ENCODE measurements at regions of chr18 and their contacts with region 1.

Region 1: GRCh38 chr18:54946149-54946581 is 13.1 kb downstream of the CCDC68 start:
- DNase-seq: peak; percentile 17
- H3K4me3 Mint-ChIP-seq: peak overlapping the region; percentile 83
- H3K27ac Mint-ChIP-seq: peak overlapping the region; percentile 71
- H3K4me1 Mint-ChIP-seq: peaks cover 17% of the 10 kb centered on the region
- H3K27me3 Mint-ChIP-seq: no peaks in the 10 kb centered on the region

Region 2: GRCh38 chr18:54405290-54405689 is 540.9 kb before region 1 on chr18:
- CTCF ChIA-PET with region 1: no interaction called
- POLR2A ChIA-PET with region 1: no interaction called
- intact Hi-C with region 1: no loop called
- DNase-seq: no peak
- H3K4me3 Mint-ChIP-seq: no peak overlapping the region
- H3K27ac Mint-ChIP-seq: no peak overlapping the region
- H3K4me1 Mint-ChIP-seq: no peaks in the 10 kb centered on the region
- H3K27me3 Mint-ChIP-seq: peaks cover 9% of the 10 kb centered on the region

Region 3: DNA sequence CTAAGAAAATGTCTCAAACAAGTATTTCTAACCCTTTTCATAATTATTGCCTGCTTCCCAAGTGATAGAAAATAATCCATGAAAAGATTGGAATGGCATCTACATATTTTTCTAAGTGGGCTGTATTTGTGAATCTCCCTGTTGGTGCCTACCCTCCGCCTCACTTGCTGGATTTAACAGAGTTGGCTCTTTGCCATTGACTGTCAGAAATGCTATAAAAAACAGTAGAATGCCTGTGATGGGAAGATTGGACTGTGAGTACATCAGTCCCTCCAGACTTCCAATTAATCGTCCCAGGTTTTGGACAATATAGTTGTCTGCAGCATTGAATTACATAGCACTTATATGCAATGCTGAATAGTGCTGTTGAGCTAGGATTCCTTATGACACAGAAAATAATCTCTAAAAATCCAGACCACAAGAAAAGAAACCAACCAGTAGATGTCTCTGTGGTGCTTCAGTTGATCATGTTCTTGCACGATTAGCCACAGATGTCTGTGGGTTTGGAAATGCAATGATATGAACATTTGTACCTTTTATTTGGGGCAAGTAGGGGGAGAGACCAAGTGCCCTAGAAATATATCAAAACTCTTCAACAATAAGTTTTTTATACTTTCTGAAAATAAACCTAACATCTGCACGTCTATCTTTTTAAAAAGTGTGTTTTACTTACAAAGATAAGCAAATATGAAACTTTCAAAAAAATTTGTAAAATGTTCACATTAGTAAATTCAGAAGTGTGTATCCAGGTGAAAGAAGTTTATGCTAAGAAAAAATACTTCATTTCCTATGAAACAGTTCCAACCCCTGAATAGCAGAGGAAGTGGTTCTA is 266.6 kb before region 1 on chr18:
- CTCF ChIA-PET with region 1: interaction called, 7 read pairs
- POLR2A ChIA-PET with region 1: no interaction called
- intact Hi-C with region 1: loop called (anchors 1 kb)
- DNase-seq: no peak
- H3K4me3 Mint-ChIP-seq: no peak overlapping the region
- H3K27ac Mint-ChIP-seq: no peak overlapping the region
- H3K4me1 Mint-ChIP-seq: peaks cover 3% of the 10 kb centered on the region
- H3K27me3 Mint-ChIP-seq: peaks cover 1% of the 10 kb centered on the region

Region 4: DNA sequence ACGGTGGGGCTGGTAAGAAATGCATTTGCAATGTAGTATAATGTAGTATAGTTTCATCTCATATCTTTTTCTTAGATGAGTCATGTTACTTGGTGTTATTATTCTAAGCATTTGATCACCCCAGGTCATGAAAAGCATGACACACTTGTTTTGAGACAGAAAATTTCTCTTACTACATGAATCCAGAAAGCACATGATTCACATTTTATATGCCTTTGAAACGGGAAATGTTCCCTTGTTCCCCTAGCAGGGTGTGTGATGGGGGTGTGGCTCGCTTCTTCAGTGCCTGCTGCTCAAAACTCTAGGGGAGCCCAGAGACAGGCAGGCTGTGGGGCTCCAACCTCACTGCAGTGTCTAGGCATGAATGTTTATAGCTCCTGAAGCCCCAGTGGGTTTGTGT is 233.9 kb before region 1 on chr18:
- CTCF ChIA-PET with region 1: no interaction called
- POLR2A ChIA-PET with region 1: no interaction called
- intact Hi-C with region 1: loop called (anchors 2 kb)
- DNase-seq: peak; percentile 40
- H3K4me3 Mint-ChIP-seq: no peak overlapping the region
- H3K27ac Mint-ChIP-seq: no peak overlapping the region
- H3K4me1 Mint-ChIP-seq: peaks cover 29% of the 10 kb centered on the region
- H3K27me3 Mint-ChIP-seq: peaks cover 5% of the 10 kb centered on the region